IMR-90 (cell line): ENCODE measurements at regions of chrX and their contacts with region 1.

Region 1: DNA sequence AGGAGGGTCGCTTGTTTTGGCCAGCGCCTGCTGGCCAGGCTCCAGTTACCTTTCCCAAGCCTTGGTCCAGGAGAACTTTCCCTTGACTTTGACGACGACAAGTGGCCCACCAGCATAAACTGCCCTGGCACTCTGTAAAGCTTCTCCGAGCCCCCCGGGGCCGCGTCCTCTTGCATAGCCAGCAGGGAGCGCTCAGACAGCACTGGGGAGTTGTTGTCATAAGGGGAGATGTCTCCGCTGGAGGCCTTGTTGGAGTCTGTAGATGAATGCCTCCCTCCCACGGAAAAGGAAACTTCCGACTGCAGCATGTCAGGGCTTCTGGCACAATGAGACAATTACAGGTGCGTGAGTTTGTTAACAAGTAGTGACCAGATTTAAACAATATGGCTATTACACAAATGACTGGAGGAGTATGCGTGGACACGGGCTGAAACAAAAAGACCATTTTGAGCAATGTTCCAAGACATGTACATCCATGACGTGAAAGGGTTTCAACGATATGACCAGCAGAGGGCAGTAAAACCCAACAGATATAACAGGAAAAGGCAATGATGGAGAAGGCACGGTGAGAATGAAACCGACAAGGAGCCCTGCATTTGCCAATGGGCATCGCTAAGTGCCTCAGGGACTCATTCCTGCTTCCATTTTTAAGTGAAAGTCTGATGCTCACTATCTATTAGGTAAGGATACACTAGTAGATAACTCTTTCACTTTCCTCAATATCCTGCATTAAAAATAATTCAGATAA is 33.0 kb downstream of the HCCS start:
- DNase-seq: peak; percentile 79
- ATAC-seq: peak; percentile 90
- H3K4me3 ChIP-seq: no peak overlapping the region
- H3K27ac ChIP-seq: no peak overlapping the region
- H3K4me1 ChIP-seq: no peaks in the 10 kb centered on the region
- H3K27me3 ChIP-seq: no peaks in the 10 kb centered on the region
- CTCF ChIP-seq: peak; percentile 71
- POLR2A ChIP-seq: no peak
- RAD21 ChIP-seq: peak; percentile 83

Region 2: DNA sequence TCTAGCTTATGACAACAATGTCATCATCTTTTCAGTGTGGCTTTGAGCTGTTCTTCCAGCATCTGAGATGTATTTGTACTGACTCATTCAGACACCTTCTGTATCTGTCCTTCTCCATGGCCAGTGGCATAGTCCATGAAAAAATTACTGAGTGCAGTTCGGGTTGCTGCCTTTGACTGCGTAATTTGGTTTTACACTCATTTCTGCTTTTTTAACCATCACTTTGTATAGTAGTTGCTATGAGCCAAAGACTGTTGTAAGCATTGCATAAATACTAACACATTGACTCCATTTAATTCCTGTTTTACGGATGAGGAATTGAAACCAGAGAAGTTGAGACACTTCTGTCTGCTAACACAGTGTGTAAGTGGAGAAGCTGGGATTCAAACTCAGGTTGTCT is 333.0 kb before region 1 on chrX:
- CTCF ChIA-PET with region 1: no interaction called
- POLR2A ChIA-PET with region 1: no interaction called
- dilution Hi-C with region 1: no loop called
- in situ Hi-C with region 1: no loop called
- intact Hi-C with region 1: no loop called
- DNase-seq: peak; percentile 17
- ATAC-seq: no peak
- H3K4me3 ChIP-seq: no peak overlapping the region
- H3K27ac ChIP-seq: no peak overlapping the region
- H3K4me1 ChIP-seq: no peaks in the 10 kb centered on the region
- H3K27me3 ChIP-seq: no peaks in the 10 kb centered on the region
- CTCF ChIP-seq: no peak
- POLR2A ChIP-seq: no peak
- RAD21 ChIP-seq: no peak

Region 3: DNA sequence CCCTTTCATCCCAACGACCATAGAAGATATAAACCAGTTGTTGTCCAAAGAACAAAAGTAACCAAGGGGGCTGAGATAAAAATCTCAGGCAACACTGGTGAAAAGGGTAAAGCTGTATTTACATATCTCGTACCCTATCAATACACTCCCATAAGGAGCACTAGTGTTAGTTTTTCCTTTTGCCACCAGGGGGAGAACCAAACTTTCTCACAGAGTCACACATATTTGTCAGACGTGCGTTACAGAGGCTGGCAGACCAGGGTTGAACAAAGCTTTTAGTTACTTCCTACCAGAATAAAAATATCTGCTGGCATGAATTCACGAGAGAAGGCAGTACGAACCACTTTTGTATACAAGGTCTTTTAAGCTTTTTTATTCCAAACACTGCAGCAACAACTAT is 237.4 kb after region 1 on chrX:
- CTCF ChIA-PET with region 1: no interaction called
- POLR2A ChIA-PET with region 1: no interaction called
- dilution Hi-C with region 1: no loop called
- in situ Hi-C with region 1: no loop called
- intact Hi-C with region 1: loop called (anchors 2 kb)
- DNase-seq: peak; percentile 63
- ATAC-seq: peak; percentile 75
- H3K4me3 ChIP-seq: no peak overlapping the region
- H3K27ac ChIP-seq: no peak overlapping the region
- H3K4me1 ChIP-seq: peaks cover 3% of the 10 kb centered on the region
- H3K27me3 ChIP-seq: no peaks in the 10 kb centered on the region
- CTCF ChIP-seq: peak; percentile 58
- POLR2A ChIP-seq: no peak
- RAD21 ChIP-seq: peak; percentile 58

Region 4: GRCh38 chrX:11423362-11423818 is 279.3 kb after region 1 on chrX:
- CTCF ChIA-PET with region 1: no interaction called
- POLR2A ChIA-PET with region 1: no interaction called
- dilution Hi-C with region 1: no loop called
- in situ Hi-C with region 1: no loop called
- intact Hi-C with region 1: loop called (anchors 10 kb)
- DNase-seq: peak; percentile 90
- ATAC-seq: peak; percentile 50; the same call in 1 of the 2 replicates
- H3K4me3 ChIP-seq: no peak overlapping the region
- H3K27ac ChIP-seq: no peak overlapping the region
- H3K4me1 ChIP-seq: peaks cover 2% of the 10 kb centered on the region; the same call in 1 of the 2 replicates
- H3K27me3 ChIP-seq: no peaks in the 10 kb centered on the region
- CTCF ChIP-seq: no peak
- POLR2A ChIP-seq: no peak
- RAD21 ChIP-seq: no peak

Region 5: DNA sequence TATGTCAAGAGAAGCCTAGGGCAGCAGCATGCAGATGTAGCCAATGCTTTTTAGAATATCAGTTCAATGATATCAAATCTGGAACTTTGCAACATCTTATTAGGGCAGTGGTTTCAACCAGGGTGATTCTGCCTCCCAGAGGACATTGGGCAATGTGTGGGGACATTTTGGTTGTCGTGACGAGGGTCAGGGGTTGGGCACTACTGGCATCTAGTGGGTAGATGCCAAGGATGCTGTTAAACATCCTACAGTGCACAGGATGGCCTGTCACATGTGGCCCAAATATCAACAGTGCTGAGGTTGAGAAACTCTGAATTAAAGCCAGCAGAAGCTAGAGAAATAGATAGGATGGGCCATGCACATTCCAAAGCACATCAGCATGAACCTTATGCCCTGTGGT is 301.4 kb after region 1 on chrX:
- CTCF ChIA-PET with region 1: no interaction called
- POLR2A ChIA-PET with region 1: no interaction called
- dilution Hi-C with region 1: no loop called
- in situ Hi-C with region 1: no loop called
- intact Hi-C with region 1: no loop called
- DNase-seq: no peak
- ATAC-seq: no peak
- H3K4me3 ChIP-seq: no peak overlapping the region
- H3K27ac ChIP-seq: no peak overlapping the region
- H3K4me1 ChIP-seq: peaks cover 7% of the 10 kb centered on the region
- H3K27me3 ChIP-seq: no peaks in the 10 kb centered on the region
- CTCF ChIP-seq: no peak
- POLR2A ChIP-seq: no peak
- RAD21 ChIP-seq: no peak

Region 6: GRCh38 chrX:11758400-11759171 is 614.5 kb after region 1 on chrX:
- CTCF ChIA-PET with region 1: no interaction called
- POLR2A ChIA-PET with region 1: no interaction called
- dilution Hi-C with region 1: no loop called
- in situ Hi-C with region 1: loop called (anchors 10 kb)
- intact Hi-C with region 1: no loop called
- DNase-seq: peak; percentile 73
- ATAC-seq: peak; percentile 79
- H3K4me3 ChIP-seq: peak overlapping the region; percentile 97
- H3K27ac ChIP-seq: peak overlapping the region; percentile 98
- H3K4me1 ChIP-seq: no peaks in the 10 kb centered on the region
- H3K27me3 ChIP-seq: no peaks in the 10 kb centered on the region
- CTCF ChIP-seq: peak; percentile 62
- POLR2A ChIP-seq: no peak
- RAD21 ChIP-seq: no peak

Region 7: GRCh38 chrX:11770320-11770719 is 626.2 kb after region 1 on chrX:
- CTCF ChIA-PET with region 1: no interaction called
- POLR2A ChIA-PET with region 1: no interaction called
- dilution Hi-C with region 1: no loop called
- in situ Hi-C with region 1: loop called (anchors 10 kb)
- intact Hi-C with region 1: loop called (anchors 5 kb)
- DNase-seq: peak; percentile 63
- ATAC-seq: peak; percentile 90
- H3K4me3 ChIP-seq: no peak overlapping the region
- H3K27ac ChIP-seq: no peak overlapping the region
- H3K4me1 ChIP-seq: no peaks in the 10 kb centered on the region
- H3K27me3 ChIP-seq: no peaks in the 10 kb centered on the region
- CTCF ChIP-seq: peak; percentile 89
- POLR2A ChIP-seq: no peak
- RAD21 ChIP-seq: peak; percentile 79